SK-N-SH (cell line): ENCODE measurements at regions of chr18 and their contacts with region 1.

Region 1: GRCh38 chr18:3703732-3704176 is 253.8 kb downstream of the TGIF1 start:
- DNase-seq: peak; percentile 57
- H3K4me3 ChIP-seq: peak overlapping the region in 1 of 2 experiments; percentile 33; a peak in 2 of 4 replicates
- H3K27ac ChIP-seq: no peak overlapping the region
- H3K4me1 ChIP-seq: peaks cover 0 to 7% of the 10 kb centered on the region in 2 experiments; a peak in 2 of 4 replicates
- H3K27me3 ChIP-seq: peaks cover 8% of the 10 kb centered on the region; the same call in 1 of the 2 replicates
- CTCF ChIP-seq: peak; percentile 80
- EP300 ChIP-seq: no peak
- RAD21 ChIP-seq: peak; percentile 63

Region 2: GRCh38 chr18:3715231-3716080 is 11.7 kb after region 1 on chr18:
- CTCF ChIA-PET with region 1: interaction called, 10 read pairs
- POLR2A ChIA-PET with region 1: no interaction called
- DNase-seq: no peak
- H3K4me3 ChIP-seq: no peak overlapping the region
- H3K27ac ChIP-seq: no peak overlapping the region
- H3K4me1 ChIP-seq: peaks cover 4 to 5% of the 10 kb centered on the region in 2 experiments; a peak in 2 of 4 replicates
- H3K27me3 ChIP-seq: peaks cover 20% of the 10 kb centered on the region
- CTCF ChIP-seq: no peak
- EP300 ChIP-seq: no peak
- RAD21 ChIP-seq: no peak

Region 3: DNA sequence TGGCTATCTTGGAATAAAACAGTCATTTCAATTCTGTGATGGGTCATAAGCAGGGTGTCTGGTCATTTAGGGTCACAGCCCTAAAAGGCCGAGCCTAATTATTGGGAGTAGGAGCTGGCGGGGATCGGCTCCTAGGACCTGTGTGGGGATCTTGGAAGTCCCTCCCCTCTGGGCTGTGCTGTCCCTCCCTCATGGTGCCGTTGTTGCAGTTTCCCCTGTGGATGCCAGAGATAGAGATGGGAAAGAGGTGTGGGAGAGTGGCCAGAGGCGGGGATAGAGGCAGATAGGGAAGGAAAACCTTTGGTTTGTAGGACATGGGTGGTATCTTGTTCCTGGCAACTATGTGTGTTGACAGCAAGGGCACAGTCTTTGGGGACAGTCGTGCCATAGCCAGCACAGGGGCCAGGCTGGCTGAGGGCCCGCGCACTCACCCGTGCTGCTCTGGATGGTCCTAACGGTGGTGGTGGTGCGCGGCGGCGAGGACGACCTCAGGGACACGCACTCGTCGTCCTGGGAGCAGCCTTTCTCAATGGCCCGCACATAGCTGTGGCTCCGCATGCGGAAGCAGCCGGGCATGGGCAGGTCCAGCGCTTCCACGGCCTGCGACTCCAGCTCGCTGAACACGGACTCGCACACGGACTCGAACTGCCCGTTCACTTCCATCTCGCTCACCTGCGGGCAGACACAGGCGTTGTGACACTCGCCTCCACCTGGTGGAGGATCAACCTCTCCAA is 25.1 kb after region 1 on chr18:
- CTCF ChIA-PET with region 1: no interaction called
- POLR2A ChIA-PET with region 1: no interaction called
- DNase-seq: no peak
- H3K4me3 ChIP-seq: no peak overlapping the region
- H3K27ac ChIP-seq: no peak overlapping the region
- H3K4me1 ChIP-seq: no peaks in the 10 kb centered on the region; a peak in 1 of 4 replicates
- H3K27me3 ChIP-seq: peaks cover 21% of the 10 kb centered on the region; the same call in 1 of the 2 replicates
- CTCF ChIP-seq: no peak
- EP300 ChIP-seq: no peak
- RAD21 ChIP-seq: no peak

Region 4: DNA sequence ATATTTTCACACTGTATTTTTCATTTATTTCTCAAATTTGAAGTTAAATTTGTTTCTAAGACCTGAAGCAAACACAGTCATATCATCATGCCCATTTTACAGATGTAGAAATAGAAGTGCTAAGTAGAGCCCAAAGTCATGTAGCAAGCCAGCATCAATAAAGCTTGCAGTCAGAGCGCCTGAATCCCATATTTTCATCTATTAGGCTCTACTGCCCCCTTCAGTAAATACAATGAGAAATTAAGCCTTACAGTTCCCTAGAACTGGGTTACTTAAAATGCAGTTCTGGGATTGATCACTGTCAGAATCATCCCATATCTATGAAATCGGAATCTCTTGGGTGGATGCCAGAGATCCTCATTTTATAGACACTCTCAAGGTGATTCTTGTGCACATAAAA is 166.1 kb after region 1 on chr18:
- CTCF ChIA-PET with region 1: interaction called, 18 read pairs
- POLR2A ChIA-PET with region 1: no interaction called
- DNase-seq: peak; percentile 26
- H3K4me3 ChIP-seq: no peak overlapping the region
- H3K27ac ChIP-seq: no peak overlapping the region
- H3K4me1 ChIP-seq: peaks cover 0 to 6% of the 10 kb centered on the region in 2 experiments; a peak in 1 of 4 replicates
- H3K27me3 ChIP-seq: peaks cover 39% of the 10 kb centered on the region
- CTCF ChIP-seq: peak; percentile 64
- EP300 ChIP-seq: no peak
- RAD21 ChIP-seq: peak; percentile 69